Activated naive CD4-positive, alpha-beta T cell treated with anti-CD3 and anti-CD28 coated beads for 36 hours (primary cell): ENCODE measurements at regions of chr16 and their contacts with region 1.

Region 1: GRCh38 chr16:1474796-1475551 is at the start of gene CLCN7:
- DNase-seq: peak; percentile 90
- H3K4me3 Mint-ChIP-seq: peak within 1 kb of the TSS; percentile 85
- H3K27ac Mint-ChIP-seq: peak within 1 kb of the TSS; percentile 82
- H3K4me1 Mint-ChIP-seq: peaks cover 36% of the 10 kb centered on the region
- H3K27me3 Mint-ChIP-seq: no peaks in the 10 kb centered on the region
- total RNA-seq, gene CLCN7: 31.7 to 34.5 TPM

Region 2: GRCh38 chr16:1428511-1428910 is 46.5 kb before region 1 on chr16:
- CTCF ChIA-PET with region 1: no interaction called
- intact Hi-C with region 1: no loop called
- DNase-seq: peak; percentile 60
- H3K4me3 Mint-ChIP-seq: no peak overlapping the region
- H3K27ac Mint-ChIP-seq: no peak overlapping the region
- H3K4me1 Mint-ChIP-seq: peaks cover 2% of the 10 kb centered on the region
- H3K27me3 Mint-ChIP-seq: no peaks in the 10 kb centered on the region

Region 3: GRCh38 chr16:1534021-1535020 is 59.3 kb after region 1 on chr16:
- CTCF ChIA-PET with region 1: no interaction called
- intact Hi-C with region 1: loop called (anchors 2 kb)
- DNase-seq: peak; percentile 48
- H3K4me3 Mint-ChIP-seq: peak overlapping the region; percentile 97
- H3K27ac Mint-ChIP-seq: peak overlapping the region; percentile 95
- H3K4me1 Mint-ChIP-seq: peaks cover 49% of the 10 kb centered on the region
- H3K27me3 Mint-ChIP-seq: no peaks in the 10 kb centered on the region